ENCODE measurements at regions of chr1 and their contacts with region 1.

Region 1: GRCh38 chr1:240455228-240455821 is 156.6 kb downstream of the GREM2 start:
- DNase-seq: no peak
- H3K4me3 ChIP-seq: no peak overlapping the region
- H3K27ac ChIP-seq: no peak overlapping the region
- H3K4me1 ChIP-seq: no peaks in the 10 kb centered on the region
- H3K27me3 ChIP-seq: no peaks in the 10 kb centered on the region
- CTCF ChIP-seq: peak in 2 of 3 experiments; percentile 69 to 71; a peak in 3 of 4 replicates
- EP300 ChIP-seq: no peak
- POLR2A ChIP-seq: no peak
- RAD21 ChIP-seq: peak; percentile 77 to 79

Region 2: DNA sequence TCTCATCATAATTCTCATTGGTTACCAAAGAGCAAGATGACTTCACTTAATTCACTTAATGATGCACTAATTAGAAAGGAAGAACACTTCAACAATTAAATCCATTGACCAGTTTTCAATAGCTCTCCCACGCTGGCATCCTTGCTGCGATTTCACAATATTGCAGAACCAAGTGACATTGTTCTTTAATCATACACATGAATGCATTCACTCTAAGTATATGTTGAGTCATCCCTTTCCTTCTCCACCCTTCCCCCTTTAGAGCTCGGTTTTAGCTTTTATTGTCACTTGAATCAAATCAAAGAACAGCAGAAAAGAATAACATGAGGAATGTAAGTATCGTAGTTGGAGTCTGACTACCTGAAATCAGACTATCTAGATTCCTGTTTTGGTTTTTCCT is 597.3 kb before region 1 on chr1:
- CTCF ChIA-PET with region 1: no interaction called
- POLR2A ChIA-PET with region 1: no interaction called
- DNase-seq: no peak
- H3K4me3 ChIP-seq: no peak overlapping the region
- H3K27ac ChIP-seq: no peak overlapping the region
- H3K4me1 ChIP-seq: no peaks in the 10 kb centered on the region; a peak in 1 of 7 replicates
- H3K27me3 ChIP-seq: no peaks in the 10 kb centered on the region
- CTCF ChIP-seq: no peak
- EP300 ChIP-seq: no peak
- POLR2A ChIP-seq: no peak
- RAD21 ChIP-seq: no peak

Region 3: DNA sequence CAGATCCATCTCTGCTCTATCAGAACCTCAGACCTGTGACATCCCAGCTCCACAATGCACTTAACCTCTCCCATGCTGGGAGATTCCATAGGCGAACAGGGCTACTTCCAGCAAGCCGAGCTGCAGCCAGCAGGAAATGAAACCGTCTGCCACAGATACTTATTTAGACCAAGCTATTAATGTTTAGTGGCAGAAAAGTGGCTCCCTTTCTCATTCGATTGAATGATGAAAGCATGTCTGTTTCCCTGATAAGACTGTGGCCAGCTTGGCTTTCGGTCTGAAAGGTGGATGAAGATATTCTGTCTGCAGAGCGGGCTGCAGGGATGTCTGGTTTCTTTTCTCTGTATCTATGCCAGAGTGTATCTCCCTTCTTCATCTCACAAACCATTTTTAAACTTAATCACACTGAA is 10.2 kb after region 1 on chr1:
- CTCF ChIA-PET with region 1: interaction called, 10 read pairs
- POLR2A ChIA-PET with region 1: no interaction called
- DNase-seq: no peak
- H3K4me3 ChIP-seq: no peak overlapping the region
- H3K27ac ChIP-seq: no peak overlapping the region
- H3K4me1 ChIP-seq: no peaks in the 10 kb centered on the region; a peak in 1 of 7 replicates
- H3K27me3 ChIP-seq: no peaks in the 10 kb centered on the region
- CTCF ChIP-seq: no peak
- EP300 ChIP-seq: no peak
- POLR2A ChIP-seq: no peak
- RAD21 ChIP-seq: no peak

Region 4: GRCh38 chr1:240487493-240487892 is 32.2 kb after region 1 on chr1:
- CTCF ChIA-PET with region 1: interaction called, 16 read pairs
- POLR2A ChIA-PET with region 1: no interaction called
- DNase-seq: no peak
- H3K4me3 ChIP-seq: no peak overlapping the region
- H3K27ac ChIP-seq: no peak overlapping the region
- H3K4me1 ChIP-seq: peaks cover 0 to 4% (median under 1%) of the 10 kb centered on the region in 4 experiments; a peak in 2 of 7 replicates
- H3K27me3 ChIP-seq: peaks cover 0 to 10% (median 8%) of the 10 kb centered on the region in 4 experiments; a peak in 4 of 7 replicates
- CTCF ChIP-seq: peak in 1 of 3 experiments; percentile 8; a peak in 1 of 4 replicates
- EP300 ChIP-seq: no peak
- POLR2A ChIP-seq: no peak
- RAD21 ChIP-seq: peak; percentile 10 to 38; a peak in 3 of 4 replicates

Region 5: GRCh38 chr1:240492832-240493440 is 37.6 kb after region 1 on chr1:
- CTCF ChIA-PET with region 1: interaction called, 16 read pairs
- POLR2A ChIA-PET with region 1: no interaction called
- DNase-seq: peak; percentile 78 to 81
- H3K4me3 ChIP-seq: peak overlapping the region; percentile 26 to 53 (median 36); a peak in 6 of 8 replicates
- H3K27ac ChIP-seq: no peak overlapping the region
- H3K4me1 ChIP-seq: peaks cover 0 to 4% (median under 1%) of the 10 kb centered on the region in 4 experiments; a peak in 2 of 7 replicates
- H3K27me3 ChIP-seq: peaks cover 0 to 14% (median 10%) of the 10 kb centered on the region in 4 experiments; a peak in 4 of 7 replicates
- CTCF ChIP-seq: peak; percentile 71 to 77 (median 76)
- EP300 ChIP-seq: no peak
- POLR2A ChIP-seq: no peak
- RAD21 ChIP-seq: peak; percentile 37 to 57

Region 6: GRCh38 chr1:240602189-240602588 is 146.9 kb after region 1 on chr1:
- CTCF ChIA-PET with region 1: interaction called, 13 read pairs
- POLR2A ChIA-PET with region 1: interaction called, 4 read pairs
- DNase-seq: no peak
- H3K4me3 ChIP-seq: no peak overlapping the region
- H3K27ac ChIP-seq: no peak overlapping the region
- H3K4me1 ChIP-seq: no peaks in the 10 kb centered on the region
- H3K27me3 ChIP-seq: no peaks in the 10 kb centered on the region
- CTCF ChIP-seq: no peak
- EP300 ChIP-seq: no peak
- POLR2A ChIP-seq: no peak
- RAD21 ChIP-seq: no peak

Region 7: DNA sequence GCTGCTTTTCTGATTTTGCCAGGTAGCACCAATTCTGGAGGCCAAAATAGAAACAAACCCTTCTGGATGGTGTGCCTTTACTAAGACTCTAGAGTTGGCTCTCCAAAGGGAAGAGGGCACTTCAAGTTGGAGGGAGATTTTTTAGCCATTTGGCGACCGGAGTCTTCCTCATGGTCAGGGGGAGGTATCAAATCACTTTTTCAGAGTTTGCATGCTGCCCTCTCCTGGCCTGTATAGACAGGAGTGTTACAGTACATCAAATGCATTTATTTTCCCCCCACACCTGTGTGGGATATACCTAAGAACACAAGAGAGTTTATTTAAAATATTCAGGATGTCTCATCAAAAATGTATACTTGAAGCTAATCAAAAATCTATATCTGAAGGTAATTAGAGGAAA is 153.4 kb after region 1 on chr1:
- CTCF ChIA-PET with region 1: interaction called, 42 read pairs
- POLR2A ChIA-PET with region 1: interaction called, 4 read pairs
- DNase-seq: no peak
- H3K4me3 ChIP-seq: no peak overlapping the region
- H3K27ac ChIP-seq: no peak overlapping the region
- H3K4me1 ChIP-seq: peaks cover 0 to 12% (median 3%) of the 10 kb centered on the region in 4 experiments; a peak in 4 of 7 replicates
- H3K27me3 ChIP-seq: peaks cover 0 to 13% (median 5%) of the 10 kb centered on the region in 4 experiments; a peak in 4 of 7 replicates
- CTCF ChIP-seq: peak; percentile 16 to 64 (median 53)
- EP300 ChIP-seq: no peak
- POLR2A ChIP-seq: no peak
- RAD21 ChIP-seq: peak; percentile 68 to 73

Region 8: DNA sequence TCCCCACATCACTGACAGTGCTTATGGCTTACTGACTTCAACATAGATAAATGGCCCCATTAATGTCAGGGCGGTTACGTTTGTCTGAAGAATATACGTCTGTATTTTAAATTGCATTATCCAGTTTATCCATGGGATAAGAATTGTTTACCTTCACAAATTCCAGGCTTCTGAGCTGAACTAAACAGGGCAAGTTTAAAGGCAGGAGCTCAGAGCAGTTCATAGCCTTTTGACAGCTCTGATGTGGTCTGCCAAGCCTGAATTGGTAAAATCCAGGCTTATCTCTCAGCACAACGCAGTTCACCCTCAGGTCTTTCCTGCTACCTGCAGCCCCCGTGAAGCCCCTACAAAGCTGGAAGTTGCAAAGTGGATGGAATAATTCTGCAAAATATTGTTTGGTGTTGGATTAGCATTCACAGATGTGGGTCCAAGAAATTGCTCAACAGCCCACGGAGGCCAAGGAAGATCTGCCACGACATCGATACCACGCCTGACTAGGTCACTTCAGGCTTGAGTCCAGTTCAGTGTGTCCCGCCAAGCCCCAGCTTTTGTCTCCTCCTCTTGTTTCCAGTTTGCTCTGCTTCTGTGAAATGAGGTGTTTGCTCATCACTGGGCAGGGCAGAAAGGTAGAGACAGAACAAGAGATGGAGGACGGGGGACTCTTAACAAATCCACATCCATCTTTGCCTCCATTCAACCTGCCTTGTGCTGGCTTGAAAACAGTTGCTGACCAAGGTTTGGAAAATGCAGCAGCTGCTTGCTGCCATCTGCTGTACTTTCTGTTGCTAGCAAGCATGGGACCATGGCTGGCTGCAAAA is 236.4 kb after region 1 on chr1:
- CTCF ChIA-PET with region 1: interaction called, 43 read pairs
- POLR2A ChIA-PET with region 1: no interaction called
- DNase-seq: peak; percentile 27 to 55
- H3K4me3 ChIP-seq: no peak overlapping the region
- H3K27ac ChIP-seq: no peak overlapping the region
- H3K4me1 ChIP-seq: no peaks in the 10 kb centered on the region
- H3K27me3 ChIP-seq: no peaks in the 10 kb centered on the region
- CTCF ChIP-seq: peak; percentile 51 to 86 (median 84)
- EP300 ChIP-seq: no peak
- POLR2A ChIP-seq: no peak
- RAD21 ChIP-seq: peak; percentile 95 to 97

Region 9: GRCh38 chr1:240784776-240785175 is 329.5 kb after region 1 on chr1:
- CTCF ChIA-PET with region 1: no interaction called
- POLR2A ChIA-PET with region 1: no interaction called
- DNase-seq: no peak
- H3K4me3 ChIP-seq: no peak overlapping the region
- H3K27ac ChIP-seq: no peak overlapping the region
- H3K4me1 ChIP-seq: no peaks in the 10 kb centered on the region
- H3K27me3 ChIP-seq: no peaks in the 10 kb centered on the region
- CTCF ChIP-seq: no peak
- EP300 ChIP-seq: no peak
- POLR2A ChIP-seq: no peak
- RAD21 ChIP-seq: no peak

Measured in H1 (cell line).